GM23248 (cell line): ENCODE measurements at regions of chr5 and their contacts with region 1.

Region 1: DNA sequence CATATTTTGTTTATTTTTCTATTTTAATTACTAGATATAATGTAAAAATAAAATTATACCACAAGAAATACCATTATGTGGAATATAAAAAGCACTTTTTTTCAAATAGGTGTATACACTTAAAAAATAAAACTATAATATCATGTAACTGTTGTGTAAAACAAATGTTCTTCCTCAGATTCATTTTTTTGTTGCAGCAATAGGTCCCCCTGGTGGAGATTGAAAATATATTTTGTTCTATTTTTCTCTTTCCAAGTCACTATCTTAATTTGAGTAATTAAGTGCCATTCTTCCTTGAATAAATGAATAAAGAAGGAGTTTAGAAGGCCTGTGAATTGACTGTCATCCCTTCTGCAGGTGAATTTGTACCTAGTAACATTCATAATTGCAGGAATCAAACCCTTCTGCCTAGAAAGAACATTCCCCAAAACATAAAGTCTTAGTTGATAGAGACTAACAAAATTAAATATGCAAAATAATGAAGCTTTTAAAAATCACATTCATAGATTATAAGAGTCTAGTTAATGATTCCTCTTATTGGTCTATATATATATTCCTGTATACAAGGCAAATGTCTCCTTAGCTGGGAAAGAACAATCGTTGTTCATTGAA is 23.4 kb downstream of the CETN3 start:
- DNase-seq: peak; percentile 39
- H3K4me3 ChIP-seq: no peak overlapping the region
- H3K27ac ChIP-seq: no peak overlapping the region
- H3K4me1 ChIP-seq: no peaks in the 10 kb centered on the region
- H3K27me3 ChIP-seq: no peaks in the 10 kb centered on the region

Region 2: GRCh38 chr5:88724201-88724600 is 1662.0 kb before region 1 on chr5:
- in situ Hi-C with region 1: loop called (anchors 25 kb)
- DNase-seq: peak; percentile 24
- H3K4me3 ChIP-seq: no peak overlapping the region
- H3K27ac ChIP-seq: no peak overlapping the region
- H3K4me1 ChIP-seq: no peaks in the 10 kb centered on the region
- H3K27me3 ChIP-seq: no peaks in the 10 kb centered on the region

Region 3: GRCh38 chr5:91383027-91383955 is 997.1 kb after region 1 on chr5 and contains the start of gene ARRDC3:
- in situ Hi-C with region 1: no loop called
- DNase-seq: peak; percentile 96
- H3K4me3 ChIP-seq: peak within 1 kb of the TSS; percentile 97
- H3K27ac ChIP-seq: peak within 1 kb of the TSS; percentile 100
- H3K4me1 ChIP-seq: peaks cover 16% of the 10 kb centered on the region
- H3K27me3 ChIP-seq: no peaks in the 10 kb centered on the region
- total RNA-seq, gene ARRDC3: 61.2 and 70.6 TPM in 2 replicates